B cell (primary cell): ENCODE measurements at regions of chr11 and their contacts with region 1.

Region 1: DNA sequence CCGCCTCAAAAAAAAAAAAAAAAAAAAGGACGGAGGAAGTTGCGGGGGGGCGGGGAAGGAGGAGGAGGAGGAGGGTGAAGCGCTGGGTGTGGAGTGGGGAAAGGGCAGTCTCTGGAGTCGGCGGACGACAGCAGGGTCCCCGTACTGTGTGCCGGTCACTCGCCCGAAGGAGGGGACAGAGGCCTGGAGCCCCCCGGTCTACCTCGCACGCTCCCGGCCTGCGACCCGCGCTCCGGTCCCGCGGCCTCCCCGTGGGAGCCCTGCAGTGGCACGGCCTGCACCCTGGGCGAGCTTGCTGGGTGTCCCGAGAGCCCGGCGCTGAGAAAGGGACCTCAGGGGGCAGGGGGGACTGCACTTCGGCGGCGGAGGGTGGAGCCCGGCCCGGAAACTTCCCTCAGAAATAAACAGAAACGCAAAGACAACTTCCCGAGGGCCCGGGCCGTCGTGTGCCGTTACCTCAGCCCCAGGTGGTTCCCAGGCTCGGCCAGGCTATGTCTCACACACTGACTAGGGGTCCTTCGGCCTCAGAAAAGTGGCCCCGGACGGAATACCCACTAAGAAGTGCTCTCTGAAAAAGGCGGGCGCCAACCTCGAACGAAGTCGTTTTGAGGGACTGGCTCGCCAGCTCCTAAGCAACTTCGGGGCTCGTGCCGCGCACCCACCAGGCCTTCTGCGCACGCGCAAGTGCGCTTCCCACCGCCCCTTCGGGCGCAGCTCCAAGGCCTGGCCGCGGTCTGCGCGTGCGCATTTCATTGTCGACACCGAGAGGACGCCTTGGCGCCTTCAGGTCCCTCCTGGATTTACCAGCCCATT is at the start of gene MAJIN:
- DNase-seq: peak; percentile 92
- ATAC-seq: peak; percentile 78
- H3K4me3 ChIP-seq: peak within 1 kb of the TSS; percentile 40 to 67 (median 50)
- H3K4me3 Mint-ChIP-seq: peak within 1 kb of the TSS; percentile 82
- H3K27ac ChIP-seq: peak within 1 kb of the TSS; percentile 61 to 73
- H3K27ac Mint-ChIP-seq: peak within 1 kb of the TSS; percentile 79
- H3K4me1 ChIP-seq: peaks cover 31 to 40% of the 10 kb centered on the region in 2 donors
- H3K4me1 Mint-ChIP-seq: peaks cover 27% of the 10 kb centered on the region
- H3K27me3 ChIP-seq: peaks cover 0 to 3% (median 1%) of the 10 kb centered on the region in 4 experiments
- H3K27me3 Mint-ChIP-seq: peaks cover 3% of the 10 kb centered on the region
- CTCF ChIP-seq: no peak
- total RNA-seq, gene MAJIN: 0.71 and 0.95 TPM in 2 replicates

Region 2: GRCh38 chr11:64916775-64917662 is 54.6 kb before region 1 on chr11 and contains the start of gene ATG2A:
- CTCF ChIA-PET with region 1: no interaction called
- POLR2A ChIA-PET with region 1: no interaction called
- intact Hi-C with region 1: loop called (anchors 5 kb)
- DNase-seq: peak; percentile 99
- ATAC-seq: peak; percentile 97
- H3K4me3 ChIP-seq: peak within 1 kb of the TSS; percentile 86 to 96 (median 90)
- H3K4me3 Mint-ChIP-seq: peak within 1 kb of the TSS; percentile 88
- H3K27ac ChIP-seq: peak within 1 kb of the TSS; percentile 44 to 84
- H3K27ac Mint-ChIP-seq: peak within 1 kb of the TSS; percentile 91
- H3K4me1 ChIP-seq: peaks cover 19 to 33% of the 10 kb centered on the region in 2 donors
- H3K4me1 Mint-ChIP-seq: peaks cover 34% of the 10 kb centered on the region
- H3K27me3 ChIP-seq: no peaks in the 10 kb centered on the region
- H3K27me3 Mint-ChIP-seq: no peaks in the 10 kb centered on the region
- CTCF ChIP-seq: no peak
- total RNA-seq, gene ATG2A: 38.6 and 43.4 TPM in 2 replicates